Sigmoid colon (tissue), 7 donors: ENCODE measurements at regions of chr5 and their contacts with region 1.

Region 1: DNA sequence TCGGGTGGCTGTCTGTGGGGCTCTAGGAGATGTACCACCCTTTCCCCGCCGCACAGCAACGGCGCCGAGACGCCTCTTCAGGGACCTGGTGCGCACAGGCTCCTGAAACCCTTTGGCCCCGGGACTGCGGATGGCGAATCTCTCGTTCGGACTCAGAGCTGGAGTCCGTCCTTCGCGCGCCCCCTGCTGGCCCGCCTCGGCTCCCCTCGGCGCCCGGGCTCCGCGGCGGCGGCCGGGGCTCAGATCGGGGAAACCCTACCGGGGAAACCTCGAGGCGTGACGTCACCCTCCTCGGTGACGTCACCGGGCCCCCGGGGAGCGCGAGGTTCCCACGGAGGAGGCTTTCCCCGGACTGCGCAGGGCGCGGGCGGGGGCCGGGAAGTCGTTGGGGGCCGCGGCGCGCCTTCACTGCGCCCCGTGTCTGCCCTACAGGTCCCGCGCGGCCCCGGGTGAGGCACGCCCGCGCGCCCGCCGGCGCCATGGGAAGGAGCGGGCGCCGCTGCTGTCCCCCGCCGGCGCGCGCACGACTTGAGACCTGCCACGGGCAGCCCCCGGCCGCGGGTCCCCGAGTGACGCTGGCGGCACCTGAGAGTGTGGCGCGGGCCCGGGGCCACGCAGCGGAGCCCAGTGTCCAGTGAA is 7.9 kb downstream of the PRR7 start:
- DNase-seq: peak; percentile 95
- H3K4me3 ChIP-seq: peak overlapping the region; percentile 20 to 53 (median 51)
- H3K27ac ChIP-seq: peak overlapping the region; percentile 68 to 82 (median 75)
- H3K4me1 ChIP-seq: peaks cover 0 to 47% (median 40%) of the 10 kb centered on the region in 4 donors
- H3K27me3 ChIP-seq: peaks cover 0 to 36% (median 26%) of the 10 kb centered on the region in 3 donors
- CTCF ChIP-seq: peak; percentile 77 to 93 (median 90)
- EP300 ChIP-seq: no peak
- POLR2A ChIP-seq: no peak

Region 2: DNA sequence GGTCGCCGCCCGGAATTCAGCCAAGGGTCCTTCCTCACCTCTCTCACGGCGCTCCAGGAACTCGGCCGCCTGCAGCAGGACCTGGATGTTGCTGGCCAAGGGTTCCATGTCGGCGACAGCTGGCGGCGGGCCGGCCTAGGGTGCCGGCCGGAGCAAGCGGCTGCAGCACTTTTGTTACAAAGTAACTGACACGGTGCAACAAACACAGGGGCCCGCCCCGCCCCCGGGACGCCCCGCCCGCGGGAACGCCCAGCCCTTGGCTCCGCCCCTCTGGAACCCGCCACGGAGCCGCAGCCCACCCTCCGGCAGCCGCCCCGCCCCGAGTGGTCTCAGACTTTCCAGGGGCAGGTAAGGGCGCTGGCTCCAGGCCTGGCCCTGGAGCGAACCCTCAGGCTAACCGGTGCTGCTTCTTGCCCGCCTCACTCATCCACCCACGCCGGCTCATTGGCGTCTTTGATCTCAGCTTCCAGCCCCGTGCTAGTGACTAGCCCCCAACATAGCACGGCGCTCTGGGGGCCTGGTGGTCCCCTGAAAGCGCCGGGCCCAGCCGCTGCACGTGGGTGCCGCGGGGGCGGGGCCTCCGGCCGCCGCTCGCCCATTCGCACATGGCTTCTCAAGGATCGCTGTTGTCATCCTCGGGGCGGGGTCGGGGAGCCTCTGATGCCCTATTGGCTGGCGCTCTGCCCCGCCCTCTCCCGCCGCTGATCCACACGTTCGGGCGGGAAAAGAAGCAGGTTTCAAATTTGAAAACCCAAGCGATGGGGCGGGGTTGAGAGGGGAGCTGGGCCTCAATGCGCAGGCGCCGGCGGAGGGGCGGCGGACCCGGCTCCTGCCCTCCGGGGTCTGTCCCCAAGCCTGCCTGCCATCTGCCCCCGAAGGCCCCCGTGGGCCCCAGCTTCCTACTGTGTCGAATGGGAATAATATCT is 142.5 kb before region 1 on chr5 and contains the start of gene MXD3:
- intact Hi-C with region 1: loop called (anchors 5 kb)
- DNase-seq: peak; percentile 98
- H3K4me3 ChIP-seq: peak within 1 kb of the TSS; percentile 26 to 52 (median 50)
- H3K27ac ChIP-seq: peak within 1 kb of the TSS in 2 of 4 donors; percentile 60 to 68
- H3K4me1 ChIP-seq: peaks cover 0 to 33% (median 25%) of the 10 kb centered on the region in 4 donors
- H3K27me3 ChIP-seq: no peaks in the 10 kb centered on the region
- CTCF ChIP-seq: no peak
- EP300 ChIP-seq: no peak
- POLR2A ChIP-seq: no peak
- total RNA-seq, gene MXD3: 7.2 to 23.8 (median 12.9) TPM

Region 3: DNA sequence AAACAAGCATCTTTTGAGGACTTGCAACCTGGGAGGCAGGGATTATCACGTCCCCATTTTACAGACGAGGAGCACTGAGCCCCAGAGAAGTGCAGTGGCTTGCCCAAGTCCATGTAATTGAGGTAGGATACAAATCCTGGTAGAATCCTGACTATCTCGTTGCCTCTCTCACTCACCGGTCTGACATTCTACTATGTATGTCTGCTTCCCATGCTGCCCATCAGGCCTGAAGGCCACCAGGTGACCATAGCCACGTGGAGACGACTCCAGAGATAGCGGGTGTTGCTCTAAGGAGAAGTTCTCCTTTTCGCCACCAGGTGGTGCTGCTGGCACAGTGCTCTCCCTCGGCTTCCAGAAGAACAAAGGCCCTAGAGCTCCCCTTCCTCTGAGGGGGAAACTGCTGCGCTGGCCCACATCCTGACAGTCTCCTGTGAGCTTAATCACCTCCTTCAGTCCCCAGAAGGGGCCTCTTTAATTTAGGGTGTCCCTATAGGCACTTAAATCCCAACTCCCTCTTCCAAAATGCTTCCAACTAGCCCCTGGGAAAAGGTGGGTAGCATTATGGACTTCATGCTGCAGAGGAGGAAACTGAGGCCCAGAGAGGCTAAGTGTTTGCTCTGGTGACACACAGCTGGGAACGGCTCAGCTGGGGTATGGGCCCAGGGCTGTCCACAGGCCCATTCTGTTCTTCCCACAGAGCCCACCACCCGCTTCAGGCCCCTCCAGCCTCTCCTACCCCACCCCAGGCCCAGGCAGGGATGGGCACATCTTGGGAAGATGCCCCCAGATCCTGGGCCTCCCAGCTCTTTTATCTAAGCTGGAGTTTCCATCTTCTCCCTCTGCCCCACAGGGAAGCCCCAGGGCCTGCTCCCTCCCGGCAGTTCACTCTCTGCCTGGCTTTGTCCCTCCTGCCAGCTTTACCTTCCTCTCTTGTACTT is 63.9 kb before region 1 on chr5:
- intact Hi-C with region 1: loop called (anchors 1 kb)
- DNase-seq: peak; percentile 89
- H3K4me3 ChIP-seq: no peak overlapping the region
- H3K27ac ChIP-seq: peak overlapping the region in 1 of 4 donors; percentile 6
- H3K4me1 ChIP-seq: peaks cover 0 to 4% (median 0%) of the 10 kb centered on the region in 4 donors
- H3K27me3 ChIP-seq: peaks cover 0 to 21% (median 4%) of the 10 kb centered on the region in 3 donors
- CTCF ChIP-seq: peak; percentile 95 to 98 (median 96)
- EP300 ChIP-seq: no peak
- POLR2A ChIP-seq: no peak

Region 4: GRCh38 chr5:177403792-177404640 is 50.5 kb before region 1 on chr5:
- intact Hi-C with region 1: loop called (anchors 1 kb)
- DNase-seq: peak; percentile 93
- H3K4me3 ChIP-seq: peak overlapping the region; percentile 20 to 60 (median 52)
- H3K27ac ChIP-seq: peak overlapping the region in 1 of 4 donors; percentile 39
- H3K4me1 ChIP-seq: peaks cover 0 to 43% (median 40%) of the 10 kb centered on the region in 4 donors
- H3K27me3 ChIP-seq: peaks cover 41 to 68% (median 63%) of the 10 kb centered on the region in 3 donors
- CTCF ChIP-seq: peak; percentile 45 to 79 (median 69)
- EP300 ChIP-seq: no peak
- POLR2A ChIP-seq: no peak

Region 5: DNA sequence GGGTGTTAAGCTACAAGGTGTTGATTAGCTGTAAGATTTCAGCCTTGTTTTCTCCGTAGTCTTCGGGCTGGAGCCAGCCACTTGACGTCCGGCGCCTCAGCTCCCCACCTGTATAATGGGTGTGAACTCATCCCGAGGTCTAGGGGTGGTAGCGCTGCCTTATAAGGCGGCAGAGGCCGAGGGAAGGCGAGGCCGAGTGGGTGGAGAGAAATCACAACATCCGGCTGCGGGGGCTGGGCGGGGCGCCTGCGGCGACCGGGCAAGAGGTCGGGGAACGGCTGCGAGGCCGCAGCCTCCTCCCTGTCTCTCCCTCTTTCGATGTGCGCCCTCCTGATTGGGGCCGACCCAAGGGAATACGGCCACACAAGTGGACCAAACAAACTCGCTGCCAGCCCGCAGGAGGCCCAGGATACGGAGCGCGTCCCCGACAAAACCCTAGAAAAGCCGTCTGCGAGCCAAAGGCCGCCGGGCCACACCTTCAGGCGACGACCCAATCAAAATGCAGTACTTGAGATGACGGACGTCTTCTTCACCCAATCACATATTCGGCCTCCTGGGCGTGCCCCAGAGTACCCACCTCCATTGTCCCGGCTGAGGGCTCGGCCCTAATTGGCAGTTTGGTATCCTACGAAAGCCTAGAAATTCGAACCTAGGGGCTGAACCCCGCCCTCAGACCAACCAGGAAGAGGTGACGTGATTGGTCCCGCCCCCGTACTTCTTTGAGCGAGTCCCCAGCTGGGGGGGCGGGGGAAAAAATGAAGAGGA is 28.5 kb before region 1 on chr5:
- intact Hi-C with region 1: loop called (anchors 2 kb)
- DNase-seq: peak; percentile 100
- H3K4me3 ChIP-seq: peak overlapping the region; percentile 40 to 53 (median 52)
- H3K27ac ChIP-seq: peak overlapping the region; percentile 89 to 95 (median 92)
- H3K4me1 ChIP-seq: peaks cover 0 to 37% (median 32%) of the 10 kb centered on the region in 4 donors
- H3K27me3 ChIP-seq: no peaks in the 10 kb centered on the region
- CTCF ChIP-seq: no peak
- EP300 ChIP-seq: no peak
- POLR2A ChIP-seq: peak; percentile 72 to 91

Region 6: DNA sequence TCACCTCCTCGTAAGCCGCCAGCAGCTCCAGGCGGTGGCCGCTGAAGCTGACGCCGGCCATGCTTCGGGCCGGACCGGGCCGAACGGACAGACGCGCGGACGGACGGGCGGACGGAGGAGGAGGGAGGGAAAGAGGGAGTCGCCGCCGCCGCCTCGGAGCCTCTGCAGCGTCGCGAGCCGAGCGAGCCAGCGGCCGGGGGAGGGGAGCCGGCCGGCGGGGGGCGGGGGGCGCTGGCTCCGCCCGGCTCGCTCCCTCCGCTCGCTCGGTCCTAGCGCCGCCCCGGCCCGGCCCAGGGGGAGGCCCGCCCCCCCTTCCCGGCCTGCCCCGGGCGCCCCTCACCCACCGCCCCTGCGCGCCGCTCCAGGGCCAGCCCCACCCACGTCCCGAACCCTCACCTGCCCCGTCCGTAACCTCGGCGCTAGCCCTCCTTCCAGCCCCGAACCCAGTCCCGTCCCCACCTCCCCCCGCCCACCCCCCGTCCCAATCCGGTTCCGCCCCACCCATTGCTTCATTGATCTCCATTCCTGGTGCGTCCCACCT is 19.0 kb after region 1 on chr5 and contains the start of gene DBN1:
- intact Hi-C with region 1: loop called (anchors 2 kb)
- DNase-seq: peak; percentile 82
- H3K4me3 ChIP-seq: peak within 1 kb of the TSS; percentile 67 to 92 (median 80)
- H3K27ac ChIP-seq: peak within 1 kb of the TSS; percentile 95 to 99 (median 96)
- H3K4me1 ChIP-seq: peaks cover 0 to 94% (median 89%) of the 10 kb centered on the region in 4 donors
- H3K27me3 ChIP-seq: no peaks in the 10 kb centered on the region
- CTCF ChIP-seq: no peak
- EP300 ChIP-seq: no peak
- POLR2A ChIP-seq: no peak
- total RNA-seq, gene DBN1: 54.8 to 100.0 (median 82.3) TPM

Region 7: GRCh38 chr5:177497292-177498033 is 42.9 kb after region 1 on chr5 and contains the start of gene PDLIM7:
- intact Hi-C with region 1: loop called (anchors 1 kb)
- DNase-seq: peak; percentile 99
- H3K4me3 ChIP-seq: peak within 1 kb of the TSS; percentile 66 to 97 (median 86)
- H3K27ac ChIP-seq: peak within 1 kb of the TSS; percentile 95 to 99 (median 97)
- H3K4me1 ChIP-seq: peaks cover 0 to 67% (median 57%) of the 10 kb centered on the region in 4 donors
- H3K27me3 ChIP-seq: no peaks in the 10 kb centered on the region
- CTCF ChIP-seq: no peak
- EP300 ChIP-seq: no peak
- POLR2A ChIP-seq: peak; percentile 80 to 84
- total RNA-seq, gene PDLIM7: 274 to 923 (median 482) TPM